ENCODE measurements at regions of chr5 and their contacts with region 1.

Region 1: DNA sequence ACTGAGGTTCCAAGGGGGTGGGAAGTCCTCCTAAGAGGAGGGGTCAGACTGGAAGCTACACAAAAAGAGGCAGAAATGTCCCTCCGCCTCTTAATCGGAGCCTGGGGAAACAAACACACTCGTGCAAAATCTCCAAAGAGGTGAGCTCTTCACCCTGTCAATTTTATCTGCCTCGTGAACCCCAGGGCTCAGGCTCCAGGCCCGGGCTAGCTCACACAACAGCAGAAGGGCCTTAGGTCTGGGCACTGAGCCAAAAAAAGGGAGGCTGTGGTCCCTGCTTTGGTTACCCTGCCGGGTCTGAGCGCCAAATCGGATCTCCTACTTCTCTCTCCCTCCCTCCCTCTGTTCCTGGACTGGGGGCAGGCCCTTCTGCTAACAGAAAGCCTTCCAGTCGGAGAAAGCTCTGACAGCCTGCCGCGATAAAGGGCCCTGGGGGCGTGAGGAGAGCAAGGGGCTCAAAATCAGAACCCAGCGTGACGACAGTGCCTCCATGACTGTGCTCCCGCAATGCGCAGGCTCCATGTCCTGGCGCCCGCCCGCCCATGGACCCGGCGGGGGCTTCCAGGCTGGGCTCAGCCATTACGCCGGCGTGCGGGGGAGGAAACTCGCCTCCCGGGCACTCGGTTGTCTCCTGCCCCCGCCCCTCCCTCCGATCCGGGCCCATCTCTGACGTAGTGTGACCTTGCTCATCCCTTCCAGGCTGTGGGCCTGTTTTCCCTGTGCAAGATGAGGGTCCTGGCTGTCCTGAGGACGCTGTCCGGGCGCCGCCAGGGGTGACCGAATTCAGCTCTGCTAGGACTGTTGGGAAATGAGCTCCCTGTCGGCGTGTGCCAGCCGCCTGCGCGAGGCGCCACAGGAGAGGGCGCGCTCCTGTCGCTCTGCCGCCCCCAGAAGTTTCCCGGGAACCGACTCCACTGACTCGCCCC is 865 bp upstream of the SLC22A4 start:
- DNase-seq: peak; percentile 94
- ATAC-seq: peak; percentile 81

Region 2: GRCh38 chr5:132363431-132364112 is 70.2 kb after region 1 on chr5:
- intact Hi-C with region 1: loop called in 1 of 2 experiments (anchors 2 kb)
- DNase-seq: peak; percentile 59
- ATAC-seq: peak; percentile 77 to 90

Region 3: DNA sequence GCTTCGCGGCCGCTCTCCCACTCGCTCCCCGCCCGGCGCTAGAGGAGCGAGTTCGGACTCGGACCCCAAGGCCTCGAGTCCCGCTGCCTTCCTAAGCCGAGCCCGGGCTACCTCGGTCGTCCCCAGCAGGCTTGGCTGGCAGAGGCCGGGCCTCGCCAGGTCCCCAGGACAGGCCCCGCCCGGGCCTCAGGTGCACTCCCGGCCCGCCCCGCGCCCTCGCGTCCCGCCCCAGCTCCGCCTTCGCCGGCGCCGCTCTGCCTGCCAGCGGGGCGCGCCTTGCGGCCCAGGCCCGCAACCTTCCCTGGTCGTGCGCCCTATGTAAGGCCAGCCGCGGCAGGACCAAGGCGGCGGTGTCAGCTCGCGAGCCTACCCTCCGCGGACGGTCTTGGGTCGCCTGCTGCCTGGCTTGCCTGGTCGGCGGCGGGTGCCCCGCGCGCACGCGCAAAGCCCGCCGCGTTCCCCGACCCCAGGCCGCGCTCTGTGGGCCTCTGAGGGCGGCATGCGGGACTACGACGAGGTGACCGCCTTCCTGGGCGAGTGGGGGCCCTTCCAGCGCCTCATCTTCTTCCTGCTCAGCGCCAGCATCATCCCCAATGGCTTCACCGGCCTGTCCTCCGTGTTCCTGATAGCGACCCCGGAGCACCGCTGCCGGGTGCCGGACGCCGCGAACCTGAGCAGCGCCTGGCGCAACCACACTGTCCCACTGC is 76.3 kb after region 1 on chr5 and contains the start of gene SLC22A5:
- intact Hi-C with region 1: loop called in 1 of 2 experiments (anchors 10 kb)
- DNase-seq: peak; percentile 73
- ATAC-seq: peak; percentile 86 to 87
- total RNA-seq, gene SLC22A5: 7.9 to 15.3 TPM

Region 4: GRCh38 chr5:132500931-132501630 is 207.8 kb after region 1 on chr5:
- intact Hi-C with region 1: loop called in 1 of 2 experiments (anchors 5 kb)
- DNase-seq: peak; percentile 72
- ATAC-seq: peak in 1 of 2 donors; percentile 4